Naive thymus-derived CD4-positive, alpha-beta T cell (primary cell): ENCODE measurements at regions of chr12 and their contacts with region 1.

Region 1: GRCh38 chr12:120686690-120687577 is at the start of gene MLEC:
- DNase-seq: peak; percentile 98 to 100 (median 99)
- ATAC-seq: peak; percentile 88
- H3K4me3 ChIP-seq: peak within 1 kb of the TSS; percentile 99
- H3K4me3 Mint-ChIP-seq: peak within 1 kb of the TSS; percentile 90 to 95 (median 94)
- H3K27ac ChIP-seq: peak within 1 kb of the TSS; percentile 77
- H3K27ac Mint-ChIP-seq: peak within 1 kb of the TSS; percentile 91 to 97 (median 95)
- H3K4me1 ChIP-seq: peaks cover 12 to 22% of the 10 kb centered on the region in 2 donors
- H3K4me1 Mint-ChIP-seq: peaks cover 22 to 53% (median 41%) of the 10 kb centered on the region in 7 donors
- H3K27me3 ChIP-seq: no peaks in the 10 kb centered on the region
- H3K27me3 Mint-ChIP-seq: peaks cover 0 to 3% (median 0%) of the 10 kb centered on the region in 5 donors
- total RNA-seq, gene MLEC: 27.6 to 132 (median 57.6) TPM

Region 2: DNA sequence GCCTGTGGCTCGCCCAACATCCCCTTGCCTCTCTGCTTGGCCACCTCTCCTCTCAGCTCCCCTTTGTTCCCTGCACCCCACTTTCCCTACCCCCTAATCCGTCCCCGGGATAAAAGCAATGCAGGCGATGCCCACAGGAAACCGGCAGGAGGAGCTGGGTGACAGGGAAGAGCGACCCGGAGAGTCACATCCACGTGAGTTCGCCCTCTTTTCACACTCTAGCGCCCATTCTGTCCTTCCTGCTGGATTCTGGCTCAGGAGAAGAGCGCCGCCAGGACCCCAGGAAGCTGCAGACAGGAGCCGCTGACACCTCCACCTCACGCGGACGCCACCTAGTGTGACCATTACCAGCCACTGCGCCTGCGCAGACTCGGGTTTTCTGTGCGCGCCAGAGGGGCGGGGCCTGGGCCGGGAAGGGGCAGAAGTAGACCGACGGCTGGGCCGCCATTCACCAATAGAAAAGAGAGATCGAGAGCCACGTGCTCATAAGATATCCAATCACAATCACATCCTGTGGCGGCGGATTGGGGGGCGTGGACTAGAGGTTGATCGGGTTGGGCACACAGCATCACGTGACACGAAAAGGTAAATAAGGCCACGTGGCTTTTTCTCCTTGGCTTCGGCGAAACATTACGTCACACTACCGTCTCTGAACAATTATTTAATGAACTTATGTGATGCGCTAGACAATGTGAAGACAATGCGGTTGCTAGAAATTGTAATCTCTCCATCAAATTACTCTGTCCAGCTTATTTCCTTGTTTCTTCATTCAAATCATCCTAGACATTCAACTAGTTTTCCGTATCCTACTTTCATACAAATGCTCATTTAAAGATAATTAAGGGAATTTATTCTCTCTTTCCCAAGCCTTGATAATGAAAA is 369.5 kb before region 1 on chr12:
- CTCF ChIA-PET with region 1: no interaction called
- POLR2A ChIA-PET with region 1: no interaction called
- intact Hi-C with region 1: loop called (anchors 1 to 2 kb)
- DNase-seq: peak; percentile 100
- ATAC-seq: peak; percentile 100
- H3K4me3 ChIP-seq: peak overlapping the region; percentile 81
- H3K4me3 Mint-ChIP-seq: peak overlapping the region; percentile 86 to 95 (median 93)
- H3K27ac ChIP-seq: peak overlapping the region; percentile 87
- H3K27ac Mint-ChIP-seq: peak overlapping the region; percentile 85 to 99 (median 98)
- H3K4me1 ChIP-seq: peaks cover 5 to 10% of the 10 kb centered on the region in 2 donors
- H3K4me1 Mint-ChIP-seq: peaks cover 4 to 16% (median 14%) of the 10 kb centered on the region in 7 donors
- H3K27me3 ChIP-seq: no peaks in the 10 kb centered on the region
- H3K27me3 Mint-ChIP-seq: peaks cover 0 to 4% (median 0%) of the 10 kb centered on the region in 5 donors

Region 3: GRCh38 chr12:120528861-120529525 is 157.9 kb before region 1 on chr12 and contains the start of gene COQ5:
- CTCF ChIA-PET with region 1: no interaction called
- POLR2A ChIA-PET with region 1: interaction called, 3 read pairs
- intact Hi-C with region 1: loop called (anchors 2 to 5 kb)
- DNase-seq: peak; percentile 64 to 83 (median 80)
- ATAC-seq: peak; percentile 97
- H3K4me3 ChIP-seq: peak within 1 kb of the TSS; percentile 75
- H3K4me3 Mint-ChIP-seq: peak within 1 kb of the TSS; percentile 93 to 100 (median 99)
- H3K27ac ChIP-seq: peak within 1 kb of the TSS; percentile 88
- H3K27ac Mint-ChIP-seq: peak within 1 kb of the TSS; percentile 96 to 100 (median 98)
- H3K4me1 ChIP-seq: no peaks in the 10 kb centered on the region
- H3K4me1 Mint-ChIP-seq: peaks cover 10 to 30% (median 23%) of the 10 kb centered on the region in 7 donors
- H3K27me3 ChIP-seq: no peaks in the 10 kb centered on the region
- H3K27me3 Mint-ChIP-seq: no peaks in the 10 kb centered on the region
- total RNA-seq, gene COQ5: 11.3 to 26.1 (median 23.5) TPM

Region 4: GRCh38 chr12:120649442-120650232 is 37.3 kb before region 1 on chr12:
- CTCF ChIA-PET with region 1: interaction called, 11 read pairs
- POLR2A ChIA-PET with region 1: interaction called, 3 read pairs
- intact Hi-C with region 1: loop called (anchors 1 kb)
- DNase-seq: no peak
- ATAC-seq: no peak
- H3K4me3 ChIP-seq: no peak overlapping the region
- H3K4me3 Mint-ChIP-seq: peak overlapping the region in 8 of 10 donors; percentile 31 to 78 (median 49)
- H3K27ac ChIP-seq: no peak overlapping the region
- H3K27ac Mint-ChIP-seq: no peak overlapping the region
- H3K4me1 ChIP-seq: peaks cover 6 to 7% of the 10 kb centered on the region in 2 donors
- H3K4me1 Mint-ChIP-seq: peaks cover 6 to 16% (median 13%) of the 10 kb centered on the region in 7 donors
- H3K27me3 ChIP-seq: peaks cover 3 to 5% of the 10 kb centered on the region in 2 donors
- H3K27me3 Mint-ChIP-seq: peaks cover 42 to 63% (median 58%) of the 10 kb centered on the region in 5 donors

Region 5: GRCh38 chr12:120904197-120904773 is 217.4 kb after region 1 on chr12 and contains the start of gene SPPL3:
- CTCF ChIA-PET with region 1: no interaction called
- POLR2A ChIA-PET with region 1: no interaction called
- intact Hi-C with region 1: loop called (anchors 1 kb)
- DNase-seq: peak; percentile 79 to 96 (median 87)
- ATAC-seq: peak; percentile 93
- H3K4me3 ChIP-seq: peak within 1 kb of the TSS; percentile 88
- H3K4me3 Mint-ChIP-seq: peak within 1 kb of the TSS; percentile 95 to 100 (median 99)
- H3K27ac ChIP-seq: peak within 1 kb of the TSS; percentile 90
- H3K27ac Mint-ChIP-seq: peak within 1 kb of the TSS; percentile 92 to 99 (median 95)
- H3K4me1 ChIP-seq: peaks cover 6 to 14% of the 10 kb centered on the region in 2 donors
- H3K4me1 Mint-ChIP-seq: peaks cover 25 to 42% (median 34%) of the 10 kb centered on the region in 7 donors
- H3K27me3 ChIP-seq: no peaks in the 10 kb centered on the region
- H3K27me3 Mint-ChIP-seq: no peaks in the 10 kb centered on the region
- total RNA-seq, gene SPPL3: 34.9 to 51.8 (median 48.2) TPM

Region 6: GRCh38 chr12:121399391-121400331 is 712.7 kb after region 1 on chr12 and contains the start of gene RNF34:
- CTCF ChIA-PET with region 1: no interaction called
- POLR2A ChIA-PET with region 1: no interaction called
- intact Hi-C with region 1: loop called in 1 of 2 experiments (anchors 2 kb)
- DNase-seq: peak; percentile 88 to 98 (median 97)
- ATAC-seq: peak; percentile 96
- H3K4me3 ChIP-seq: peak within 1 kb of the TSS; percentile 93
- H3K4me3 Mint-ChIP-seq: peak within 1 kb of the TSS; percentile 89 to 99 (median 94)
- H3K27ac ChIP-seq: peak within 1 kb of the TSS; percentile 91
- H3K27ac Mint-ChIP-seq: peak within 1 kb of the TSS; percentile 91 to 97 (median 94)
- H3K4me1 ChIP-seq: peaks cover 20 to 26% of the 10 kb centered on the region in 2 donors
- H3K4me1 Mint-ChIP-seq: peaks cover 29 to 52% (median 39%) of the 10 kb centered on the region in 7 donors
- H3K27me3 ChIP-seq: no peaks in the 10 kb centered on the region
- H3K27me3 Mint-ChIP-seq: no peaks in the 10 kb centered on the region
- total RNA-seq, gene RNF34: 61.1 to 98.4 (median 81.7) TPM

Region 7: GRCh38 chr12:122526683-122527477 is 1839.9 kb after region 1 on chr12 and contains the starts of genes KNTC1 and RSRC2:
- CTCF ChIA-PET with region 1: no interaction called
- POLR2A ChIA-PET with region 1: no interaction called
- intact Hi-C with region 1: loop called in 1 of 2 experiments (anchors 2 kb)
- DNase-seq: peak; percentile 87 to 99 (median 99)
- ATAC-seq: peak; percentile 96
- H3K4me3 ChIP-seq: peak within 1 kb of the TSS; percentile 86
- H3K4me3 Mint-ChIP-seq: no peak within 1 kb of the TSS
- H3K27ac ChIP-seq: peak within 1 kb of the TSS; percentile 94
- H3K27ac Mint-ChIP-seq: peak within 1 kb of the TSS in 1 of 9 donors; percentile 68
- H3K4me1 ChIP-seq: peaks cover 30 to 37% of the 10 kb centered on the region in 2 donors
- H3K4me1 Mint-ChIP-seq: peaks cover 24 to 41% (median 36%) of the 10 kb centered on the region in 7 donors
- H3K27me3 ChIP-seq: no peaks in the 10 kb centered on the region
- H3K27me3 Mint-ChIP-seq: no peaks in the 10 kb centered on the region
- total RNA-seq, gene KNTC1: 24.5 to 102 (median 31.0) TPM
- total RNA-seq, gene RSRC2: 89.7 to 249 (median 139) TPM